GM12878 (cell line): ENCODE measurements at regions of chr7 and their contacts with region 1.

Region 1: DNA sequence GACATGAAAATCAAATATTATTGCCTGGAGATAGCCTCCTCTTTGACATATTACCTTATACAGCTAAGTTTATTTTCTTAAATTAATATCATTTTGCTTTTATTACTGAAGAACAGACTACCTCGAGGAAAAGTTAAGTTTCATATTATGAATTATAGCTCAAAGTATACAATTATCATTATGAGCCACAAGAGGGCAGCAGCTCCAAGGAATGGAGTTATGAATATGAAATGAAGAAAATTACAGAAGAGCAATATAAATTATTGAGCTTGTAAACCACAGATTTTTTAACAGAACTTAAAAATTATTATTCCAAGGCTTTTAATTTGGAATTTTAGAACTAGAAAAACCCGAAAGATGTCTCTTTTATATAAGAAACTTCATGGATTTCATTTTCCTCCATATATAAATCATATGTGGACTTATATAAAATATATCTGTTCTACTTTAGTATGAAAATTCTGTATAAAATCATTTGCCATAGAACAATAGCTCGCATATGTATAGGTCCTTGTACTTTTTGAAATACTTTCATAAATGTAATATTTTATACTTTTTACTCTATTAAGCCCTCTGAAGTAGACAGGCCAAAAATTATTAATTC is 40.1 kb downstream of the IQUB start:
- DNase-seq: no peak
- ATAC-seq: peak; percentile 67
- H3K4me3 ChIP-seq: no peak overlapping the region
- H3K27ac ChIP-seq: no peak overlapping the region
- H3K4me1 ChIP-seq: no peaks in the 10 kb centered on the region
- H3K27me3 ChIP-seq: no peaks in the 10 kb centered on the region
- CTCF ChIP-seq: peak; percentile 56 to 63 (median 62)
- EP300 ChIP-seq: no peak
- POLR2A ChIP-seq: no peak
- RAD21 ChIP-seq: peak; percentile 74

Region 2: DNA sequence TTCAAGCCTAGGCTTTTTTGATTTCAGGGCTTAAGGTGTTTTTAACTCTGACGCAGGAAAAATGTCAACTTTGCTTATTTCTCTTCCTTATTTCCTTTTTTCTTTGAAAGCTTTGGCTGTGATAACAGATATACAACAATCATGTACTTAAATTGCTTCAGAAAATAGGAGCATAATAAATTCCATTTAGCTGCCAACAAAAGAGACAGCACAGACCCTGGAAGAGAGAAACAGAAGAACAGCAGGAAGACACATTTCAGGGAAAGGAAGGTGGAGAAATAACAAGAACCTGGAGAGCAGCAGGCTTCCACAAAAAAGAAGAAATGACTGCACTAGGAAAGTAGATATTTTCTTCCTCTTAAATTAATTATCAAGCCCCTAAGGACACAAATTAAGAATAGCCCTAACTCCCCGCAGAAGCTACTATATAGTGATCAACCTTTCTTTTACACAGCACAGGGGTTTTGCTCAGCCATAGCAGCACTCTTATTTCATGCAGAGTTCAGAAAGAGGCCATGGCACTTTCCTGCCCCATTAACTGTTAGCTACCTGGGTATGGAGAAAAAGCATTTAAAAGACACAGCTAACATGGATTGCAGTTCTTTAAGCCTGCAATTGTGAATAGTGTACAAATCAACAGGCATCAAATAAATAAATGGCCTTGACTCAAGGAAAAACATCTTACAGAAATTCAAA is 21.4 kb before region 1 on chr7:
- CTCF ChIA-PET with region 1: interaction called, 11 read pairs
- POLR2A ChIA-PET with region 1: no interaction called
- RAD21 ChIA-PET with region 1: interaction called, 4 read pairs
- SMC1A ChIA-PET with region 1: interaction called, 3 read pairs
- in situ Hi-C with region 1: no loop called
- intact Hi-C with region 1: no loop called
- DNase-seq: no peak
- ATAC-seq: no peak
- H3K4me3 ChIP-seq: no peak overlapping the region
- H3K27ac ChIP-seq: no peak overlapping the region
- H3K4me1 ChIP-seq: no peaks in the 10 kb centered on the region
- H3K27me3 ChIP-seq: no peaks in the 10 kb centered on the region
- CTCF ChIP-seq: no peak
- EP300 ChIP-seq: no peak
- POLR2A ChIP-seq: no peak
- RAD21 ChIP-seq: no peak

Region 3: GRCh38 chr7:123534383-123535260 is 40.3 kb after region 1 on chr7 and contains the start of gene IQUB:
- CTCF ChIA-PET with region 1: interaction called, 44 read pairs
- POLR2A ChIA-PET with region 1: interaction called, 9 read pairs
- RAD21 ChIA-PET with region 1: interaction called, 23 read pairs
- SMC1A ChIA-PET with region 1: interaction called, 15 read pairs
- in situ Hi-C with region 1: no loop called
- intact Hi-C with region 1: loop called (anchors 1 kb)
- DNase-seq: peak; percentile 82
- ATAC-seq: peak; percentile 90
- H3K4me3 ChIP-seq: peak within 1 kb of the TSS; percentile 69
- H3K27ac ChIP-seq: no peak within 1 kb of the TSS; the same call in 1 of the 2 replicates
- H3K4me1 ChIP-seq: no peaks in the 10 kb centered on the region
- H3K27me3 ChIP-seq: peaks cover 0 to 3% of the 10 kb centered on the region in 2 experiments; a peak in 1 of 4 replicates
- CTCF ChIP-seq: no peak
- EP300 ChIP-seq: no peak
- POLR2A ChIP-seq: peak; percentile 49
- RAD21 ChIP-seq: no peak
- polyA plus RNA-seq, gene IQUB: not detected

Region 4: GRCh38 chr7:123552641-123553040 is 58.3 kb after region 1 on chr7:
- CTCF ChIA-PET with region 1: interaction called, 11 read pairs
- POLR2A ChIA-PET with region 1: no interaction called
- RAD21 ChIA-PET with region 1: interaction called, 4 read pairs
- SMC1A ChIA-PET with region 1: interaction called, 10 read pairs
- in situ Hi-C with region 1: no loop called
- intact Hi-C with region 1: no loop called
- DNase-seq: no peak
- ATAC-seq: no peak
- H3K4me3 ChIP-seq: no peak overlapping the region
- H3K27ac ChIP-seq: no peak overlapping the region
- H3K4me1 ChIP-seq: no peaks in the 10 kb centered on the region
- H3K27me3 ChIP-seq: no peaks in the 10 kb centered on the region
- CTCF ChIP-seq: no peak
- EP300 ChIP-seq: no peak
- POLR2A ChIP-seq: no peak
- RAD21 ChIP-seq: no peak

Region 5: DNA sequence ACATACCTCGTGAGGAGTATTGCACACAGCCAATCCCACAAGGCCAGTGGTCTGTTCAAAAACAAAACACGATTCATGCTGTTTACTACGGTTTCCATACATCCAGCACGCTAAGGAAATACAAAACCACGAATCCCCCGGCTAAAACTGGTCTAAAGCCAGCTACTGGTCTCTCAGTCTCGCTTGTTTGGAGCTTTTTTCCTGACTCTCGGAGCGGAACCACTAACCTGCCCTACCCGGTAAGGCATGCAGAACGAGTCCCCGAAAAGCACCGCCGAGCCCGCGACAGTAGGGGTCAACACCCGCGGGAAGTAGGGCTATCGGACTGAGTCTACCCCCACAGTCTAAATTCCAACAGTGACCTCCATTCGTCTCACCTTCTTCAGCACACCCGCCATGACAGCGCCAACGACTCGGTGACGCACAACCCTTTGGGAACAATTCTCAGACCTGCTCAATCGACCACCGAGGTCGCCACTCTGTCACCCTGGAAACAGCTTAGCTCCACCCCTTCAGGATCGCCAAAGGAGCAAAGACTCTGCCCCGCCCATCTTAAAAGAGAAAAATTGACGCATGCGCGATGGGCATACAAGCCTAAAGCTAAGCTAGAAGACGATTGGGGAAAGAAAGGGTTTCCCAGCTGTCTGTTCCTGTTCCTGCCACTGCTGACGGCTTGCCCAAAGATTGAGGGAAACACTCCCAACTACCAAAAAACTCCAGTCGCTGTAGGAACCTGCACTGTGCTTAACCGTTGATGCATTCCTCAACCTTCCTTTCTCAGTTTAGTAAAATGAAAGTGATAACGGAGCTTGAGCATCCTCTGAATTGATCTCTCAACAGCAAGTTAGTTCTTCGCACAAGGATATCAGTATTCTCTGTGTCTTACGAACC is 63.3 kb after region 1 on chr7 and contains the start of gene NDUFA5:
- CTCF ChIA-PET with region 1: interaction called, 11 read pairs
- POLR2A ChIA-PET with region 1: no interaction called
- RAD21 ChIA-PET with region 1: interaction called, 4 read pairs
- SMC1A ChIA-PET with region 1: interaction called, 10 read pairs
- in situ Hi-C with region 1: no loop called
- intact Hi-C with region 1: no loop called
- DNase-seq: peak; percentile 95
- ATAC-seq: peak; percentile 97
- H3K4me3 ChIP-seq: peak within 1 kb of the TSS; percentile 90
- H3K27ac ChIP-seq: peak within 1 kb of the TSS; percentile 85
- H3K4me1 ChIP-seq: no peaks in the 10 kb centered on the region
- H3K27me3 ChIP-seq: no peaks in the 10 kb centered on the region
- CTCF ChIP-seq: no peak
- EP300 ChIP-seq: peak in 1 of 2 experiments; percentile 44; a peak in 1 of 4 replicates
- POLR2A ChIP-seq: peak; percentile 90
- RAD21 ChIP-seq: no peak
- polyA plus RNA-seq, gene NDUFA5: 183 to 209 TPM

Region 6: GRCh38 chr7:123570401-123571182 is 76.3 kb after region 1 on chr7:
- CTCF ChIA-PET with region 1: interaction called, 6 read pairs
- POLR2A ChIA-PET with region 1: no interaction called
- RAD21 ChIA-PET with region 1: interaction called, 4 read pairs
- SMC1A ChIA-PET with region 1: interaction called, 3 read pairs
- in situ Hi-C with region 1: no loop called
- intact Hi-C with region 1: loop called (anchors 10 kb)
- DNase-seq: no peak
- ATAC-seq: peak; percentile 58
- H3K4me3 ChIP-seq: no peak overlapping the region
- H3K27ac ChIP-seq: no peak overlapping the region
- H3K4me1 ChIP-seq: no peaks in the 10 kb centered on the region
- H3K27me3 ChIP-seq: no peaks in the 10 kb centered on the region
- CTCF ChIP-seq: no peak
- EP300 ChIP-seq: no peak
- POLR2A ChIP-seq: no peak
- RAD21 ChIP-seq: no peak

Region 7: GRCh38 chr7:123624527-123625183 is 130.4 kb after region 1 on chr7:
- CTCF ChIA-PET with region 1: interaction called, 37 read pairs
- POLR2A ChIA-PET with region 1: no interaction called
- RAD21 ChIA-PET with region 1: interaction called, 11 read pairs
- SMC1A ChIA-PET with region 1: interaction called, 6 read pairs
- in situ Hi-C with region 1: no loop called
- intact Hi-C with region 1: loop called (anchors 5 kb)
- DNase-seq: peak; percentile 25
- ATAC-seq: peak; percentile 97
- H3K4me3 ChIP-seq: no peak overlapping the region
- H3K27ac ChIP-seq: no peak overlapping the region
- H3K4me1 ChIP-seq: no peaks in the 10 kb centered on the region
- H3K27me3 ChIP-seq: no peaks in the 10 kb centered on the region
- CTCF ChIP-seq: peak; percentile 68 to 94 (median 91)
- EP300 ChIP-seq: no peak
- POLR2A ChIP-seq: no peak
- RAD21 ChIP-seq: peak; percentile 40